ENCODE measurements at regions of chr10 and their contacts with region 1.

Region 1: DNA sequence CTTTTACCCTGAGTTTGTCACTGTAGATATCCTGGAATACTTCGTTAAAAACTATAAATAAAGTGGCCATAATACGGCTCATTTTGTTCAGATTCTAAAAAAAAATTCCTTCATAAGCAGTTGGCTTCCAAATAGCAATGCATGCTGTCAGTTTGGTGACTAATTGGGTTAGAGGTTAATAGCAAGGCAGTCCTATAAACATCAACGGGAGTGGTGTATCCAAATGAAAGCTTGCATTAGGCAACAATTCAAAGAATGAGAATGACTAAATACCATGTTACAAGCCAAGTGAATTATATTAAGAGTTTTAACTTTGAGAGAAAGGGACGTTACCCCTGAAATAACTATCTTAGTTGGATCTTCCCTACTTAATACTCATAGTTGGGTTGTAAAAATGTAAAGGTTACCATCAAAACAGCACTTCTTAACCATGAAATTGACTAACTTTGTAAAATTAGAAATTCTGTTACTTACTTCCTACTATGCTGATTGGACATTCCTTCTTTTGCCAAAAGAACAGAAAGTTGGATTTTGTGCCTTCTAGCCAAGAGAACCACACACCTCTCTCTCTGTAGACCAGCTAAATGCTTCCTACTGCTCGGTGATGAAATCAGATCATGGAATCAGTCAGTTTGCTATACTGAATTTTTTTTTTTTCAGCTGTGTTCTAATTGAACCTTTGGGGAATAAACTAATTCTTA is 98.0 kb downstream of the KAT6B start:
- DNase-seq: no peak

Region 2: GRCh38 chr10:74728225-74728624 is 196.2 kb before region 1 on chr10:
- intact Hi-C with region 1: no loop called
- DNase-seq: no peak

Region 3: GRCh38 chr10:74988832-74989561 is 64.6 kb after region 1 on chr10:
- intact Hi-C with region 1: loop called (anchors 10 kb)
- DNase-seq: no peak

Region 4: DNA sequence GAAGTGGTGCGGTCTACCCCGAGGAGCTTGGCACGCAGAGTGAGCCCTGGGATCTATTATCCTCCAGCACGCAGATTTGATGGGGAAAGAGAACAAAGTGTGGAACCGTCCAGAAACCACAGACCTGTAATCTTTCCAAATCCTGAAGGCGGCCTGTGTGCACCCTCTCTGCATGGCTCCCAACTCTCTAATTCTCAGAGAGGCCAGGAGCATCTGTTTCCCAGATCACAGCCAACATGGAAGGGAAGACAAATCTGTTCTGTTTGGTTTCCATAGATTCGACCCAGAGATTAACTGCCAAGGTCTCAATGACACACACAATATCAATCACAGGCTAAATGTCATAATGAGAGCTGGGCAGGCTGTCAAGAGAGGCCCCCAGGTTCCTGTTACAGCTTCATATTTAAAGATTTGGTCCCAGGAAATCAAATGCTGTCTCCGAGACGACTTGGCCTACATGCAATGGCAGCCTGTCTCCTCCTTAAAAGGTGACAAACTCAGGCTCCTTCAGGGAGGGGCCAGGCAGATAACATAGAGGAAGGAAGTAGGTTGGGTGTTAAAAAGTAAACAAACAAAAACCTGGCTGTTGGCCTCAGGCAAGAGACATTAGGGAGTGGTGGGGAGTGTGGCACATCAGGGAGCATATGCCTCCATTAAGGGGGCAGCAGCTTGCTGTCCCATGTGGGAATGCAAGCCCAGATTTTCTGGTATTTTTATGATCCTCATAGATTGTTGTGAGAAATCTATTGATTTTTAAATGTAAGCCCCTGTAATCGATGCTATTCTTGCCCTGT is 138.3 kb after region 1 on chr10:
- intact Hi-C with region 1: no loop called
- DNase-seq: no peak